PC-3 (cell line): ENCODE measurements at regions of chr1 and their contacts with region 1.

Region 1: DNA sequence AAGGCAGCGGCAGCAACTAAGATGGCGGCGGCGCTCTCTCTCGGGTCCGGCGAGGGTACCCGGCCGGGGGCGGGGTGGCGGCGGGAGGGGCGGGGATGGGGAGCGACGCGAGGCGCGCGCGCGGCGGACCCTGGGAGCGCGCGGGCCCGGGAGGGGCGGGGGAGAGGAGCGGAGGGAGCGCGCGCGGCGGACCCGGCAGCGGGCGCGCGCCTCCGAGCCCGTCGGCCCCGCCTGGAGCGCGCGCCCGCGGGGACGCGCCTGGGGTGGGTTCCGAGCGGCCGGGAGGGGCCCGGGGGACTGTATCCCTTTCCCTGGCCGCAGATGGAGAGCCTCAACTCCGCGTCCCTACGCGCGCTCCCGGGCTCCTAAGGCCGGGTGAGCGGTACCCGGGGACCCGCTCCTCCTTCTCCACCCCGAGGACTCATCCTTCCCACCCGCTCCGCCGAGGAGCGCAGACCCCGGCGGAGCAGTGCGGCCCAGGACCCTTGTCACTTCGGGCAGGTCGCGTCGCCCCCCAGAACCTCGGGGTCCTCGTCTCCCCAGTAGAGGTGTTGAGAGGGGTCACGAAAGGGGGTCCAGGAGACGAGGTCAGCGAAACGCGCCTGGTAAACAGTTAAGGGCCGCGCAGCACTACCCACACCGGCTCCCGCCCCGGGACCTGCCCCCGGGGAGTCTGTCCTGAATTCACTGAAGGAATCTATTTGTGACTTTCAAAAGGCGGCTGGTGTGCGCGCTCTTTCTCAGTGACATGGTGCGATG is at the start of gene CLSTN1:
- DNase-seq: peak; percentile 87
- ATAC-seq: peak; percentile 31
- H3K4me3 ChIP-seq: peak within 1 kb of the TSS; percentile 83
- H3K27ac ChIP-seq: peak within 1 kb of the TSS; percentile 42
- H3K4me1 ChIP-seq: peaks cover 38% of the 10 kb centered on the region
- H3K27me3 ChIP-seq: no peaks in the 10 kb centered on the region
- CTCF ChIP-seq: no peak
- total RNA-seq, gene CLSTN1: 98.3 and 117 TPM in 2 replicates

Region 2: GRCh38 chr1:9835758-9836450 is 11.8 kb after region 1 on chr1:
- CTCF ChIA-PET with region 1: no interaction called
- POLR2A ChIA-PET with region 1: interaction called, 3 read pairs
- intact Hi-C with region 1: loop called (anchors 1 kb)
- DNase-seq: peak; percentile 55
- ATAC-seq: peak; percentile 72
- H3K4me3 ChIP-seq: no peak overlapping the region; the same call in 1 of the 2 replicates
- H3K27ac ChIP-seq: peak overlapping the region; percentile 89
- H3K4me1 ChIP-seq: peaks cover 30% of the 10 kb centered on the region
- H3K27me3 ChIP-seq: no peaks in the 10 kb centered on the region
- CTCF ChIP-seq: no peak

Region 3: GRCh38 chr1:9867408-9868243 is 43.5 kb after region 1 on chr1:
- CTCF ChIA-PET with region 1: no interaction called
- POLR2A ChIA-PET with region 1: interaction called, 39 read pairs
- intact Hi-C with region 1: loop called (anchors 2 kb)
- DNase-seq: peak; percentile 77
- ATAC-seq: peak; percentile 95
- H3K4me3 ChIP-seq: no peak overlapping the region
- H3K27ac ChIP-seq: no peak overlapping the region
- H3K4me1 ChIP-seq: peaks cover 5% of the 10 kb centered on the region
- H3K27me3 ChIP-seq: no peaks in the 10 kb centered on the region
- CTCF ChIP-seq: peak; percentile 95

Region 4: DNA sequence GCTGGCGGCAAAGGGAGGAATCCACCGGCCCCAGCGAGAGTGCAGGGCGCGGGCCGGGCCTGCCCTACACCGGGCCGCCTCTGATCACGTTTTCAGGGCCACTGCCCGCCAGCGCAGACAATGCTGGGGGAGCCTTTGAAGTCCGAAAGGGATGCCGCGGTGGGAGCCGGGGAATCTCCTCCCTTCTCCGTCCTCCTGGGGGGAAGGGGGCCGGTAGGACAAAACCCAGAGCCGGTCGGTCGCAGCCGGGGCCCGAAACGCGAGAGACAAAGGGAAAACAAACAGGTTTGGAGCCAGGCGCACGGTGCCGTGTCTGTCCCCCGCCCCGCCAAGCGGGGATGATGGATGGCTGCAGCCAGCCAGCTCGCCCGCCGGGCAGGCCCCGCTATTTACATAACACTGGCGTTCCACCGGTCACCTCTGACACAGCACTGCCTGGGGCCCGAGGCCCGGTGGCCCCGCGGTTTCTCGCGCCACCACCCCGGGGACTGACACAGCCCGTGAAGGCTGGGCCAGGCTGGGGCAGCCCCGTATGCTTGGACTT is 880.3 kb after region 1 on chr1:
- CTCF ChIA-PET with region 1: no interaction called
- POLR2A ChIA-PET with region 1: no interaction called
- intact Hi-C with region 1: loop called (anchors 10 kb)
- DNase-seq: no peak
- ATAC-seq: no peak
- H3K4me3 ChIP-seq: no peak overlapping the region
- H3K27ac ChIP-seq: no peak overlapping the region
- H3K4me1 ChIP-seq: peaks cover 4% of the 10 kb centered on the region
- H3K27me3 ChIP-seq: no peaks in the 10 kb centered on the region
- CTCF ChIP-seq: no peak